Naive thymus-derived CD4-positive, alpha-beta T cell (primary cell): ENCODE measurements at regions of chr6 and their contacts with region 1.

Region 1: GRCh38 chr6:63571881-63572732 is at the starts of genes LOC128125822 and PTP4A1:
- DNase-seq: peak; percentile 92 to 98 (median 97)
- ATAC-seq: peak; percentile 90
- H3K4me3 ChIP-seq: peak within 1 kb of the TSS; percentile 91
- H3K4me3 Mint-ChIP-seq: peak within 1 kb of the TSS; percentile 87 to 96 (median 94)
- H3K27ac ChIP-seq: peak within 1 kb of the TSS; percentile 97
- H3K27ac Mint-ChIP-seq: peak within 1 kb of the TSS; percentile 89 to 100 (median 98)
- H3K4me1 ChIP-seq: peaks cover 10 to 16% of the 10 kb centered on the region in 2 donors
- H3K4me1 Mint-ChIP-seq: peaks cover 21 to 47% (median 40%) of the 10 kb centered on the region in 7 donors
- H3K27me3 ChIP-seq: no peaks in the 10 kb centered on the region
- H3K27me3 Mint-ChIP-seq: no peaks in the 10 kb centered on the region
- total RNA-seq, gene PTP4A1: 26.4 to 165 (median 73.8) TPM

Region 2: DNA sequence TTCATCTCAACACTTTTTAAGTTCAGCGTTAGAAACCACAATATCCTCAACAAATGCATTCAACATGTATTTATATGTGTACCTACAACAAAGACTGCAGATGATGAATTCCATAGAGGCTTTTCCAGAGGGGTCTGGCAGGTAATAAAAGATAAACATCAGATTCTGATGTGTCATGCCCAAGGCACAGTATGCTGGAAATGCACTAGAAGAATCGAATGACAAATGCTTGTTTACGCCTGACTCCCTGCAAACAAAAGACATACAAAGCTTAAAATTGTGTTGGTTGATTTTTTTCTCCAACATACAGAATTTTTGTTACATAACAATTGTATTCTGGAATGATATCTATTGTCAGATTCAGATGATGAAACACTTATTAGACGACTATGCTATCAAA is 252.2 kb before region 1 on chr6 and contains the start of gene LGSN:
- CTCF ChIA-PET with region 1: no interaction called
- POLR2A ChIA-PET with region 1: no interaction called
- intact Hi-C with region 1: no loop called
- DNase-seq: no peak
- ATAC-seq: no peak
- H3K4me3 ChIP-seq: no peak within 1 kb of the TSS
- H3K4me3 Mint-ChIP-seq: no peak within 1 kb of the TSS
- H3K27ac ChIP-seq: no peak within 1 kb of the TSS
- H3K27ac Mint-ChIP-seq: no peak within 1 kb of the TSS
- H3K4me1 ChIP-seq: no peaks in the 10 kb centered on the region
- H3K4me1 Mint-ChIP-seq: no peaks in the 10 kb centered on the region
- H3K27me3 ChIP-seq: no peaks in the 10 kb centered on the region
- H3K27me3 Mint-ChIP-seq: peaks cover 2 to 8% (median 4%) of the 10 kb centered on the region in 5 donors
- total RNA-seq, gene LGSN: 0.11 TPM in 1 of 5 experiments, not detected in the others

Region 3: GRCh38 chr6:63352587-63353285 is 219.4 kb before region 1 on chr6:
- CTCF ChIA-PET with region 1: interaction called, 4 read pairs
- POLR2A ChIA-PET with region 1: no interaction called
- intact Hi-C with region 1: loop called (anchors 1 to 2 kb)
- DNase-seq: no peak
- ATAC-seq: peak; percentile 86
- H3K4me3 ChIP-seq: no peak overlapping the region
- H3K4me3 Mint-ChIP-seq: peak overlapping the region in 2 of 10 donors; percentile 22 to 66
- H3K27ac ChIP-seq: no peak overlapping the region
- H3K27ac Mint-ChIP-seq: peak overlapping the region in 2 of 9 donors; percentile 13 to 48
- H3K4me1 ChIP-seq: no peaks in the 10 kb centered on the region
- H3K4me1 Mint-ChIP-seq: peaks cover 0 to 15% (median 7%) of the 10 kb centered on the region in 7 donors
- H3K27me3 ChIP-seq: no peaks in the 10 kb centered on the region
- H3K27me3 Mint-ChIP-seq: peaks cover 10 to 27% (median 21%) of the 10 kb centered on the region in 5 donors

Region 4: DNA sequence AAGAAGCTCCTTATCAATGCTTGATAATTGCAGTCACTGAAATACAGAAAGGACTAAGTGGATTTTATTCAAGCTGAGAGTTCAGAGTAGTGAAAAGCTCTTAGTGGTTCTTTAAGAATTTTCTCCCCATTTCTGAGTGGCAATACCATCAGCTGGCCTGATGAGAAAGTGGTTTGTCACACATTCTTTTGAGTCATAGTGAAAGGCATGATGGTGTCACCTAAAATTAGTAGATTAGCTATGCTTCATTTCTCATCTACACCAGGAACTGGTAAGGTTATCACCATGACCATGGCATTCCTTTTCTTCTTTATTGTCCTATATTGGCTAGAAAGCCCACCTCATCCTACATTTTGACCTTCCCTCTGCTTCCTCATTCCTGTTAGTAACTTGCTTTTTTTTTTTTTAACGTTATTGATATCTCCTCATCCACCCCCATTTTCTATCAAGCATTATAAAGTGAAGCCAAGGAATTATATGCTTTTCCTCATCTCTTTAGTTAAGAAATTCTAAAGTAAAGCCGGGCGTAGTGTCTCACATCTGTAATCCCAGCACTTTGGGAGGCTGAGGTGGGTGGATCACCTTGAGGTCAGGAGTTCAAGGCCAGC is 67.2 kb before region 1 on chr6:
- CTCF ChIA-PET with region 1: no interaction called
- POLR2A ChIA-PET with region 1: no interaction called
- intact Hi-C with region 1: loop called in 1 of 2 experiments (anchors 5 kb)
- DNase-seq: no peak
- ATAC-seq: no peak
- H3K4me3 ChIP-seq: no peak overlapping the region
- H3K4me3 Mint-ChIP-seq: no peak overlapping the region
- H3K27ac ChIP-seq: no peak overlapping the region
- H3K27ac Mint-ChIP-seq: no peak overlapping the region
- H3K4me1 ChIP-seq: no peaks in the 10 kb centered on the region
- H3K4me1 Mint-ChIP-seq: peaks cover 0 to 11% (median 0%) of the 10 kb centered on the region in 7 donors
- H3K27me3 ChIP-seq: no peaks in the 10 kb centered on the region
- H3K27me3 Mint-ChIP-seq: peaks cover 0 to 7% (median 0%) of the 10 kb centered on the region in 5 donors

Region 5: DNA sequence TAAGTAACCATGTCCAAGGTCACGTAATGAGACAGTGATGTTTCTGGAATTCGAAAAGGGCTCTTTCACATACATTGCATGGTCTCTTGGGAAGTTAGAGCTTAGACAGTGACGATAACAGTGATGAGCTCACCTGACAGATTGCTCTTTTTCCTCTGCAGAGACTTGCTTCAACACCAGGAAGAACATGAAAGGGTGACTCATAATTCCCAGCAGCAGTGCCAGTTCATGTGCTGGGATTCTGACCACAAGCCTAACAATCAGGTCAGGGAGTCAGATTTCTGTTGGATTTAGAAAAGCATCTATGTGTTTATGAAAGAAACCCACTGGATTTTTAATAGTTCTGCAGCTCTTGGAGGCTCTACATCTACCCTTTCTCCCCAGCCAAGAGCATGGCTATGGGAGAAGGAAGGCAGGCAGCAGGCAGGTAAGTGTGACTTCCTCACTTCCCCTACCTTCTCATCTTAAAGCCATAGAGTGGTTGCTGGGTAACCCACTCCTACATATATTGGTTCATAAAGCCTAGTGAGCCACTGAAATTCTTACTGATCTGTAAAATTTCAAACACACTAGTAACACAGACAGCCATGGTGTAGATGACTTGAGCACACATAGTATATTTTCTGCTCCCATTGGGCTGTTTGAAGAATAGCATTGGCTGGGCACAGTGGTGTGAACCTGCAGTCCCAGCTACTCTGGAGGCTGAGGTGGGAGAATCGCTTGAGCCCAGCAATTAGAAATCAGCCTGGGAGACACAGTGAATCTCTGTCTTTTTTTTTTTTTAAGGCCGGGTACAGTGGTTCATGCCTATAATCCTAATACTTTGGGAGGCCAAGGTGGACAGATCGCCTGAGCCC is 44.2 kb before region 1 on chr6:
- CTCF ChIA-PET with region 1: no interaction called
- POLR2A ChIA-PET with region 1: interaction called, 3 read pairs
- intact Hi-C with region 1: loop called in 1 of 2 experiments (anchors 1 kb)
- DNase-seq: no peak
- ATAC-seq: no peak
- H3K4me3 ChIP-seq: no peak overlapping the region
- H3K4me3 Mint-ChIP-seq: peak overlapping the region in 1 of 10 donors; percentile 23
- H3K27ac ChIP-seq: no peak overlapping the region
- H3K27ac Mint-ChIP-seq: peak overlapping the region in 1 of 9 donors; percentile 71
- H3K4me1 ChIP-seq: no peaks in the 10 kb centered on the region
- H3K4me1 Mint-ChIP-seq: peaks cover 2 to 43% (median 10%) of the 10 kb centered on the region in 7 donors
- H3K27me3 ChIP-seq: no peaks in the 10 kb centered on the region
- H3K27me3 Mint-ChIP-seq: no peaks in the 10 kb centered on the region

Region 6: DNA sequence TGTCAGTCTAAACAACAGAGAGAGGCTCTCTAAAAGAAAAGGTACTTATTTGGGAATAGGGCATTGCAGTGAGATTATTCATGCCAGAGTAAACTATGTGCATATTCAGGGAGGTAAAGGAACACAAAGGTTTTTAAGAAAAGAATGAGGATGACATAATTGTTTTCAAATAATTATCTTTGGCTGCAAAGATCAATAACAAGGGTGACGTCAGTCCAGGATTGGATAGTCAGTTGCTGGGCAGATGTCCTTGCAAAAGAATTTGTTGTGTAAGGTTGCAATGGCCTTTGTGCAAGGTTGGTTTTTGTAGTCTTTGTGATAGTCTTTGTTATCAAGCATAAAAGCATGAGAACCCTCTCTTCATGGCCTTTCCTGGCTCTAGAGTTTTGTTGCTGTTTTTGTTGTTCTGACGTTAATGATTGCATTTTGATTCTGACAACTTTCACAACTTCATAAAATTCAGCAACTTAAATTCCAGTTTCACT is 17.9 kb after region 1 on chr6:
- CTCF ChIA-PET with region 1: no interaction called
- POLR2A ChIA-PET with region 1: no interaction called
- intact Hi-C with region 1: no loop called
- DNase-seq: no peak
- ATAC-seq: no peak
- H3K4me3 ChIP-seq: no peak overlapping the region
- H3K4me3 Mint-ChIP-seq: no peak overlapping the region
- H3K27ac ChIP-seq: no peak overlapping the region
- H3K27ac Mint-ChIP-seq: no peak overlapping the region
- H3K4me1 ChIP-seq: no peaks in the 10 kb centered on the region
- H3K4me1 Mint-ChIP-seq: peaks cover 0 to 4% (median 0%) of the 10 kb centered on the region in 7 donors
- H3K27me3 ChIP-seq: no peaks in the 10 kb centered on the region
- H3K27me3 Mint-ChIP-seq: peaks cover 0 to 25% (median 0%) of the 10 kb centered on the region in 5 donors

Region 7: GRCh38 chr6:63624091-63624490 is 52.0 kb after region 1 on chr6:
- CTCF ChIA-PET with region 1: no interaction called
- POLR2A ChIA-PET with region 1: no interaction called
- intact Hi-C with region 1: no loop called
- DNase-seq: no peak
- ATAC-seq: no peak
- H3K4me3 ChIP-seq: no peak overlapping the region
- H3K4me3 Mint-ChIP-seq: no peak overlapping the region
- H3K27ac ChIP-seq: no peak overlapping the region
- H3K27ac Mint-ChIP-seq: no peak overlapping the region
- H3K4me1 ChIP-seq: no peaks in the 10 kb centered on the region
- H3K4me1 Mint-ChIP-seq: no peaks in the 10 kb centered on the region
- H3K27me3 ChIP-seq: no peaks in the 10 kb centered on the region
- H3K27me3 Mint-ChIP-seq: peaks cover 3 to 34% (median 24%) of the 10 kb centered on the region in 5 donors

Region 8: DNA sequence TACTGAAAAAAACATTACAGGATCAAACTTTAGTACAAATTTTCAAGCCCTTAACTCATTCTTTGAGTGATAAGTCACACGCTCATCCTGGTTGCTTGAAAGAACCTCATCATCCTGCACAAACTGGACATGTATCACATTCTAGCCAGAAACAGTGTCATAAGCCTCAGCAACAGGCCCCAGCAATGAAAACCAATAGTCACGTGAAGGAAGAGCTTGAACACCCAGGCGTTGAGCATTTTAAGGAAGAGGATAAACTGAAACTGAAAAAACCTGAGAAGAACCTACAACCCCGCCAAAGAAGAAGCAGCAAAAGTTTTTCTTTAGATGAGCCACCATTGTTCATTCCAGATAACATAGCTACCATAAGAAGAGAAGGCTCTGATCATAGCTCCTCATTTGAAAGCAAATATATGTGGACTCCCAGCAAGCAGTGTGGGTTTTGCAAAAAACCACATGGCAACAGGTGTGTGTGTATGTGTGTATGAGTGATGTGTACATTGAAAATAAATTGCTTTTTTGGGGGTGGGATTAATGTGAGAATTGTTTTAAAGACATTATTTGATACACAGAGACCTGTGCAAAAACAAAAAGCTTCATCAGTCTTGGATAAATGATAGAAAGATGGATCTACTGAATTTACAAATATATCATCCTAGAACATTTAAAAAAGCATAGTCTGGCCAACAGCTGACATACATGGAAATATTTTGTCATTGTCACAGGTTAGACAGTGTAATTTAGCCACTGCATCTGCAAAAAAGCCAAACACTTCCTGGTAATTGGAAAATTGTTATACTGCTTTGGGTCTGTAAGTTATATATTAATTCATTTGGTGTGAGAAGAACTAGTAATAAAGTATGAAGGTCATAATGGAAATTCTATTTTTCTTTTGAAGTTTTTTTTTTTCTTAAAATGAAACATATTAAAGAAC is 113.6 kb after region 1 on chr6:
- CTCF ChIA-PET with region 1: no interaction called
- POLR2A ChIA-PET with region 1: no interaction called
- intact Hi-C with region 1: loop called in 1 of 2 experiments (anchors 5 kb)
- DNase-seq: no peak
- ATAC-seq: peak; percentile 65
- H3K4me3 ChIP-seq: no peak overlapping the region
- H3K4me3 Mint-ChIP-seq: peak overlapping the region in 1 of 10 donors; percentile 9
- H3K27ac ChIP-seq: no peak overlapping the region
- H3K27ac Mint-ChIP-seq: peak overlapping the region in 7 of 9 donors; percentile 2 to 84 (median 40)
- H3K4me1 ChIP-seq: no peaks in the 10 kb centered on the region
- H3K4me1 Mint-ChIP-seq: peaks cover 32 to 64% (median 50%) of the 10 kb centered on the region in 7 donors
- H3K27me3 ChIP-seq: no peaks in the 10 kb centered on the region
- H3K27me3 Mint-ChIP-seq: no peaks in the 10 kb centered on the region